Naive thymus-derived CD4-positive, alpha-beta T cell (primary cell): ENCODE measurements at regions of chr3 and their contacts with region 1.

Region 1: DNA sequence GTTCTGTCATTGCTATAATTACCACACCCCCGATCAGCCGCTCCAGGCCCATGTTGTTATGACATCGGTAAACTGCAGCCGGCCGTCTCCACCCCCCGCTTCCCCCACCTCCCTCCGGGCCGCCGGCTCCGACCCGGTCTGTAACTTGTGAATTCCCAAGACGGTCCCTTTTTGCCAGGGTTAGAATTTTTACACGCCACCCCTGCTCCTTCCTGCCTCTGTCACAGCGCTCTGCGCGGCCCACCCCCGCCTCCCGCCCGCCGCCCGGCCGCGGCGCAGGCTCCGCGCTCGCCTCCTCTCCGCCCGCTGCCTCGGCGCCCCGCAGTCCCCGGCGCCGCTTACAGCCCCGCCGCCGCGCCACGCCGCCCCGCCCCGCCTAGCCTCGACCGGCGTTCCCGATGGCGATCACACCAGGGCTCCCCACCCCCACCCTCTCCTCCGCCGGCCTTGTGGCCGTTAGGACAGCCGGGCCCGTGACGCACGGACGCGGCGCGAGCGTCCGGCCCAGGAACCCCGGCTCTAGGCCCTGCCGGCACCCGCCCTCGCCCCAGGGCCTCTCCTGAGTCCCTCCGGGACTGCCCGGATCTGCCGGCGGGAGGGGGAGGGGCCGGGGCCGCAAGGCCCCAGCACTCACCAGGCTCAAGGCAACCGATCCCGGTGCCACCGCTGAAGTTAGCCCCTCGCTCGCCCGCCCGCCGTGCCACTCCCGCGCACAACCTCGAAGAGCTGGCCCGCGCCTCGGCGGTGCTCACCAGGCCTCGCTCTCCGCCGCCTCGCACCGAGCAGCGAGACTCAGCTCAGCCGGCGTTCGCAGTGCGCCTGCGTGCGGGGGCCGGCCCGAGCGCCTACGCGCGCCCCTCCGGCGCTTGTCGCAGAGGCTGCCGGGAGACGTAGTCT is at the start of gene KPNA1:
- DNase-seq: peak; percentile 81 to 92 (median 90)
- ATAC-seq: peak; percentile 92
- H3K4me3 ChIP-seq: peak within 1 kb of the TSS; percentile 80
- H3K4me3 Mint-ChIP-seq: peak within 1 kb of the TSS; percentile 77 to 100 (median 92)
- H3K27ac ChIP-seq: peak within 1 kb of the TSS; percentile 100
- H3K27ac Mint-ChIP-seq: peak within 1 kb of the TSS; percentile 78 to 97 (median 91)
- H3K4me1 ChIP-seq: peaks cover 6 to 21% of the 10 kb centered on the region in 2 donors
- H3K4me1 Mint-ChIP-seq: peaks cover 35 to 52% (median 46%) of the 10 kb centered on the region in 7 donors
- H3K27me3 ChIP-seq: no peaks in the 10 kb centered on the region
- H3K27me3 Mint-ChIP-seq: no peaks in the 10 kb centered on the region
- total RNA-seq, gene KPNA1: 50.6 to 70.2 (median 54.3) TPM

Region 2: GRCh38 chr3:122415720-122416654 is 98.4 kb before region 1 on chr3 and contains the start of gene WDR5B:
- CTCF ChIA-PET with region 1: interaction called, 3 read pairs
- POLR2A ChIA-PET with region 1: interaction called, 24 read pairs
- intact Hi-C with region 1: loop called (anchors 1 kb)
- DNase-seq: peak; percentile 95 to 99 (median 99)
- ATAC-seq: peak; percentile 94
- H3K4me3 ChIP-seq: peak within 1 kb of the TSS; percentile 96
- H3K4me3 Mint-ChIP-seq: peak within 1 kb of the TSS; percentile 92 to 99 (median 97)
- H3K27ac ChIP-seq: peak within 1 kb of the TSS; percentile 93
- H3K27ac Mint-ChIP-seq: peak within 1 kb of the TSS; percentile 98 to 100 (median 100)
- H3K4me1 ChIP-seq: peaks cover 19 to 24% of the 10 kb centered on the region in 2 donors
- H3K4me1 Mint-ChIP-seq: peaks cover 24 to 72% (median 65%) of the 10 kb centered on the region in 7 donors
- H3K27me3 ChIP-seq: no peaks in the 10 kb centered on the region
- H3K27me3 Mint-ChIP-seq: peaks cover 0 to 3% (median 0%) of the 10 kb centered on the region in 5 donors
- total RNA-seq, gene WDR5B: 4.8 to 19.4 (median 6.4) TPM

Region 3: DNA sequence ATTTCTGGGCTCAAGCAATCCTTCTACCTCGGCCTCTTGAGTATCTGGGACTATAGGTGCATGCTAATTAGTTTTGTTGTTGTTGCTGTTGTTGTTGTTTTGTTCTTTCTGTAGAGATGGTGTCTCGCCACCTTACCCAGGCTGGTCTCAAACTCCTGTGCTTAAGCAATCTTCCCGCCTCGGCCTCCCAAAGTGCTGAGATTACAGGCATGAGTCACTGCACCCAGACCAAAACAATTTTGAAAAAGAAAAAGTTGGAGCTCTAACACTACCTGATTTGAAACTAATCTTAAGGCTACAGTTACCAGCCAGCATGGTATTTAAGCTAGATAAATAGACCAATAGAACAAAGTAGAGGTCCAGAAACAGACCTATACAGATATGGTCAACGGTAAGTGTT is 29.4 kb before region 1 on chr3:
- CTCF ChIA-PET with region 1: no interaction called
- POLR2A ChIA-PET with region 1: interaction called, 3 read pairs
- intact Hi-C with region 1: loop called in 1 of 2 experiments (anchors 1 kb)
- DNase-seq: no peak
- ATAC-seq: no peak
- H3K4me3 ChIP-seq: no peak overlapping the region
- H3K4me3 Mint-ChIP-seq: no peak overlapping the region
- H3K27ac ChIP-seq: no peak overlapping the region
- H3K27ac Mint-ChIP-seq: peak overlapping the region in 1 of 9 donors; percentile 41
- H3K4me1 ChIP-seq: peaks cover 0 to 6% of the 10 kb centered on the region in 2 donors
- H3K4me1 Mint-ChIP-seq: peaks cover 16 to 77% (median 60%) of the 10 kb centered on the region in 7 donors
- H3K27me3 ChIP-seq: no peaks in the 10 kb centered on the region
- H3K27me3 Mint-ChIP-seq: no peaks in the 10 kb centered on the region

Region 4: GRCh38 chr3:122533931-122534334 is 19.6 kb after region 1 on chr3:
- CTCF ChIA-PET with region 1: no interaction called
- POLR2A ChIA-PET with region 1: interaction called, 4 read pairs
- intact Hi-C with region 1: loop called in 1 of 2 experiments (anchors 2 kb)
- DNase-seq: peak in 1 of 9 donors; percentile 34
- ATAC-seq: no peak
- H3K4me3 ChIP-seq: no peak overlapping the region
- H3K4me3 Mint-ChIP-seq: peak overlapping the region in 1 of 10 donors; percentile 18
- H3K27ac ChIP-seq: no peak overlapping the region
- H3K27ac Mint-ChIP-seq: peak overlapping the region in 4 of 9 donors; percentile 44 to 71 (median 58)
- H3K4me1 ChIP-seq: no peaks in the 10 kb centered on the region
- H3K4me1 Mint-ChIP-seq: peaks cover 1 to 38% (median 5%) of the 10 kb centered on the region in 7 donors
- H3K27me3 ChIP-seq: no peaks in the 10 kb centered on the region
- H3K27me3 Mint-ChIP-seq: no peaks in the 10 kb centered on the region

Region 5: DNA sequence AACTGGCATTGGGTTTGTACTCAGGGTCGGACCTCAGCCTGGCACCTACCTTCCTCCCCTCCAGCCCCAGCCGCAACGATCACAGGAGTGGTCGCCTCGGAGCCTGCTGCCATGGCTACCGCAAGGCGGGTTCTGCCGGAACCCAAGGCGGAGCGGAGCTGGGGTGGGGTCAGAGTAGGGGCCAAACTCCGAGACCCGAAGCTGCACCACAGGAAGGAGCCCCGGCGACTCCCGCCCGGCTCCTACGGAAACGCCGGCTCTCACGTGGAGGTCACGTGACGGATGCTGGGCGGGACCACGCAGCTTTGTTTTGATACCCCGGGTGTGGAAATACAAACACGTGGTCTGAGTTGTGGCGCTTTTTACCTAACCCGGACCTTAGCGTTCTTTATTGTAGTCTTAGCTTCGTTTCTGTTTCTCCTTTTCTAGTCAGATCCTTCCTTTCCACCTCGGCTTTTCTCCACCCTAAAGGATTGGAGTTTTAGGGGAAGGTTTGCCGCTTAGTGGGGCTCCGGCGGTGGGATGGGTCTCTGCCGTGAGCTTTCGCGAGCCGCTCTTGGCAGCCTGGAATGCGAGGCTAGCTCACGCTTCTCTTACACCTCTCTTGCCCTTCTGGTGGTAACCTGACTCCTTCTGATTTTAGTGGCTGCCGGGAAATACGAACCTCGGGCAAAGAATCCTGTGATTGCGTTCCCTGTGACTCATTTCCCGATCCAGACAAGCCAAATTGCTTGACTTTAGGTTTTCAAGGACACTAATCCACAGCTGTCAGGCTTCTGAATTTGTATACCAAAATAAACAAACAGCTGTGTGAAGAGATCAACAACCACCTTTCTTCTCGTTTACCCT is 279.4 kb after region 1 on chr3 and contains the start of gene HSPBAP1:
- CTCF ChIA-PET with region 1: no interaction called
- POLR2A ChIA-PET with region 1: no interaction called
- intact Hi-C with region 1: loop called (anchors 1 to 2 kb)
- DNase-seq: peak; percentile 71 to 90 (median 86)
- ATAC-seq: peak; percentile 77
- H3K4me3 ChIP-seq: peak within 1 kb of the TSS; percentile 83
- H3K4me3 Mint-ChIP-seq: peak within 1 kb of the TSS in 5 of 10 donors; percentile 91 to 97 (median 95)
- H3K27ac ChIP-seq: peak within 1 kb of the TSS; percentile 82
- H3K27ac Mint-ChIP-seq: peak within 1 kb of the TSS in 6 of 9 donors; percentile 79 to 99 (median 96)
- H3K4me1 ChIP-seq: peaks cover 22 to 34% of the 10 kb centered on the region in 2 donors
- H3K4me1 Mint-ChIP-seq: peaks cover 20 to 29% (median 27%) of the 10 kb centered on the region in 7 donors
- H3K27me3 ChIP-seq: no peaks in the 10 kb centered on the region
- H3K27me3 Mint-ChIP-seq: no peaks in the 10 kb centered on the region
- total RNA-seq, gene HSPBAP1: 9.0 to 31.5 (median 23.3) TPM

Region 6: GRCh38 chr3:123584988-123585937 is 1070.9 kb after region 1 on chr3 and contains the start of gene HACD2:
- CTCF ChIA-PET with region 1: no interaction called
- POLR2A ChIA-PET with region 1: no interaction called
- intact Hi-C with region 1: loop called (anchors 2 to 10 kb)
- DNase-seq: peak; percentile 87 to 96 (median 90)
- ATAC-seq: peak; percentile 96
- H3K4me3 ChIP-seq: peak within 1 kb of the TSS; percentile 98
- H3K4me3 Mint-ChIP-seq: peak within 1 kb of the TSS in 3 of 10 donors; percentile 87 to 90 (median 89)
- H3K27ac ChIP-seq: peak within 1 kb of the TSS; percentile 79
- H3K27ac Mint-ChIP-seq: peak within 1 kb of the TSS; percentile 44 to 93 (median 83)
- H3K4me1 ChIP-seq: peaks cover 8 to 13% of the 10 kb centered on the region in 2 donors
- H3K4me1 Mint-ChIP-seq: peaks cover 14 to 32% (median 30%) of the 10 kb centered on the region in 7 donors
- H3K27me3 ChIP-seq: no peaks in the 10 kb centered on the region
- H3K27me3 Mint-ChIP-seq: no peaks in the 10 kb centered on the region
- total RNA-seq, gene HACD2: 15.9 to 28.3 (median 24.0) TPM